ENCODE measurements at regions of chr6 and their contacts with region 1.

Region 1: GRCh38 chr6:2988426-2989331 is 11.0 kb upstream of the NQO2 start:
- DNase-seq: peak; percentile 84
- H3K4me3 Mint-ChIP-seq: peak overlapping the region; percentile 87
- H3K27ac Mint-ChIP-seq: peak overlapping the region; percentile 97
- H3K4me1 Mint-ChIP-seq: peaks cover 12% of the 10 kb centered on the region
- H3K27me3 Mint-ChIP-seq: no peaks in the 10 kb centered on the region

Region 2: DNA sequence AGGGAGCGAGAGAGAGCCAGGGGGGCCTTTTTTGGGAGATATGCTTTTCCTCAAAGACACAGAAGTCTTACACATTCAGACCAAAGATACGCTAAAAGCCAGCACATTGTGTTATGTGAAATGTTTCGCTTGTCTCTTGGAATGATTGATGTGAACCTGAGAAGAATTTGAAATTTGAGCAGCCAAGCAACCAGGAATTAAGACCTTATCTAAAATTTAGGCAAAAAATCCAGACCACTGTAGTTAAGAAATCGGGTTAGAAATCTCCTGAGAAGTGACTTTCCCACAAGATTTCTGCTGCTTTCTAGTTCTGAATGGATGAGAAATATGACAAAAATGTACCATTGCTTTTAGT is 520.1 kb before region 1 on chr6:
- CTCF ChIA-PET with region 1: no interaction called
- intact Hi-C with region 1: no loop called
- DNase-seq: no peak
- H3K4me3 Mint-ChIP-seq: no peak overlapping the region
- H3K27ac Mint-ChIP-seq: no peak overlapping the region
- H3K4me1 Mint-ChIP-seq: no peaks in the 10 kb centered on the region
- H3K27me3 Mint-ChIP-seq: peaks cover 16% of the 10 kb centered on the region

Region 3: GRCh38 chr6:2841264-2842138 is 147.2 kb before region 1 on chr6 and contains the start of gene SERPINB1:
- CTCF ChIA-PET with region 1: interaction called, 17 read pairs
- intact Hi-C with region 1: loop called (anchors 1 kb)
- DNase-seq: peak; percentile 94
- H3K4me3 Mint-ChIP-seq: peak within 1 kb of the TSS; percentile 81
- H3K27ac Mint-ChIP-seq: peak within 1 kb of the TSS; percentile 87
- H3K4me1 Mint-ChIP-seq: peaks cover 61% of the 10 kb centered on the region
- H3K27me3 Mint-ChIP-seq: no peaks in the 10 kb centered on the region
- total RNA-seq, gene SERPINB1: 200 to 208 TPM

Region 4: DNA sequence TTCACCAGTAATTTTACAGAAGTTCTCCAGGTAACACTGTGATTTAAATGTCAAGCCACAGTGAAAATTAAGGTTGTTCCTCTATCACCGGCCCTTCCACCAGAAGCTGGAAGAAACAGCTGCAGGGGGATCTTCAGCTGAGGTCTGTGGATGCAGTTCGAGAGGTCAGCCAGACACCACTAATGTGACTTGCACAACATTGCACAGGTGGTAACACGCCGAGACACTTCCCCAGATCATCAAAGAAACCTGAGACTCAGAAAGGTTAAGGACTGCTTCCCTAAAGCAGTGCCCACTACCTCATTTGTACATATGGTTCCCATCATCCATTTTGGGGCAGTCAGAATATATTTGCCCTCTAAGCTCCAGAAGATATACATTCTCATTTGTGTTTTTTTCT is 77.5 kb before region 1 on chr6:
- CTCF ChIA-PET with region 1: interaction called, 3 read pairs
- intact Hi-C with region 1: loop called (anchors 1 kb)
- DNase-seq: no peak
- H3K4me3 Mint-ChIP-seq: no peak overlapping the region
- H3K27ac Mint-ChIP-seq: no peak overlapping the region
- H3K4me1 Mint-ChIP-seq: peaks cover 43% of the 10 kb centered on the region
- H3K27me3 Mint-ChIP-seq: no peaks in the 10 kb centered on the region

Region 5: DNA sequence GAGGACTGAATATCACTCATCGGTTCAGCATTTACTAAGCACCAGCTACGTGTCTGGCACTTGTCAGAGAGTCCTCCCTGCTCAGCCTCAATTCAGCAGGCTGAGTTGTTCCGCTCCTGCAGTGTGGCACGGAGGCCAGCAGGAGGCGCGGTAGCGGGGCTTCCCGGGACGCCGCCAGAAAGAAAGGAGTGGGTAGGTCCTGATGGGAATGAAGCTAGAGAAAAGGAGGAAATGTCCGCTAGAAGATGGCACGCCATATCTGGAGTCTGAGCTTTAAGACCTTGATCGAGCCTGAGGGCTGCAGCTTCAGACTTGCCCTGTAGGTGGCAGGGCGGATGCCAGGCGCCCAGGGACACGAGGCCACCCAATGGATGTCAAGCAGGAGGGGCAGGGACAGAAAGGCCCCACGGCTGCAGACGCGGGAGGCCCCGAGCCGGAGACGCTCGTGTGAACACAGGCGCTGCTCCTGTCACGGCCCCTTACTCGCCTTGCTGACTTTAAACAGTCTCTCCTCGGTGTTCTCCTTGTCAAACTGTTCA is 36.1 kb before region 1 on chr6:
- CTCF ChIA-PET with region 1: interaction called, 45 read pairs
- intact Hi-C with region 1: no loop called
- DNase-seq: peak; percentile 43
- H3K4me3 Mint-ChIP-seq: no peak overlapping the region
- H3K27ac Mint-ChIP-seq: no peak overlapping the region
- H3K4me1 Mint-ChIP-seq: peaks cover 8% of the 10 kb centered on the region
- H3K27me3 Mint-ChIP-seq: no peaks in the 10 kb centered on the region

Region 6: GRCh38 chr6:2999618-3000557 is 11.2 kb after region 1 on chr6 and contains the start of gene NQO2:
- CTCF ChIA-PET with region 1: interaction called, 12 read pairs
- intact Hi-C with region 1: loop called (anchors 1 kb)
- DNase-seq: peak; percentile 91
- H3K4me3 Mint-ChIP-seq: peak within 1 kb of the TSS; percentile 82
- H3K27ac Mint-ChIP-seq: peak within 1 kb of the TSS; percentile 82
- H3K4me1 Mint-ChIP-seq: peaks cover 16% of the 10 kb centered on the region
- H3K27me3 Mint-ChIP-seq: no peaks in the 10 kb centered on the region
- total RNA-seq, gene NQO2: 18.8 to 21.1 TPM

Measured in activated naive CD4-positive, alpha-beta T cell treated with anti-CD3 and anti-CD28 coated beads for 36 hours (primary cell).